ENCODE measurements at regions of chrX and their contacts with region 1.

Region 1: GRCh38 chrX:155417769-155418168 is 35.9 kb downstream of the F8A2 start:
- DNase-seq: no peak
- ATAC-seq: peak; percentile 56
- H3K4me3 ChIP-seq: no peak overlapping the region
- H3K27ac ChIP-seq: no peak overlapping the region
- H3K4me1 ChIP-seq: no peaks in the 10 kb centered on the region
- H3K27me3 ChIP-seq: no peaks in the 10 kb centered on the region
- CTCF ChIP-seq: no peak
- EP300 ChIP-seq: no peak
- POLR2A ChIP-seq: no peak
- RAD21 ChIP-seq: no peak

Region 2: GRCh38 chrX:154136627-154137161 is 1281.1 kb before region 1 on chrX:
- CTCF ChIA-PET with region 1: no interaction called
- POLR2A ChIA-PET with region 1: no interaction called
- RAD21 ChIA-PET with region 1: no interaction called
- SMC1A ChIA-PET with region 1: no interaction called
- in situ Hi-C with region 1: loop called (anchors 25 kb)
- intact Hi-C with region 1: no loop called
- DNase-seq: no peak
- ATAC-seq: peak; percentile 85
- H3K4me3 ChIP-seq: no peak overlapping the region
- H3K27ac ChIP-seq: no peak overlapping the region
- H3K4me1 ChIP-seq: no peaks in the 10 kb centered on the region
- H3K27me3 ChIP-seq: no peaks in the 10 kb centered on the region; a peak in 1 of 4 replicates
- CTCF ChIP-seq: peak; percentile 63 to 70 (median 67)
- EP300 ChIP-seq: no peak
- POLR2A ChIP-seq: no peak
- RAD21 ChIP-seq: peak; percentile 53

Region 3: GRCh38 chrX:154785716-154786115 is 632.1 kb before region 1 on chrX:
- CTCF ChIA-PET with region 1: no interaction called
- POLR2A ChIA-PET with region 1: interaction called, 13 read pairs
- RAD21 ChIA-PET with region 1: no interaction called
- SMC1A ChIA-PET with region 1: no interaction called
- in situ Hi-C with region 1: no loop called
- intact Hi-C with region 1: no loop called
- DNase-seq: no peak
- ATAC-seq: no peak
- H3K4me3 ChIP-seq: no peak overlapping the region
- H3K27ac ChIP-seq: no peak overlapping the region
- H3K4me1 ChIP-seq: no peaks in the 10 kb centered on the region; the same call in 1 of the 2 replicates
- H3K27me3 ChIP-seq: no peaks in the 10 kb centered on the region
- CTCF ChIP-seq: no peak
- EP300 ChIP-seq: no peak
- POLR2A ChIP-seq: no peak
- RAD21 ChIP-seq: no peak

Region 4: GRCh38 chrX:155534797-155535196 is 117.0 kb after region 1 on chrX:
- CTCF ChIA-PET with region 1: no interaction called
- POLR2A ChIA-PET with region 1: no interaction called
- RAD21 ChIA-PET with region 1: no interaction called
- SMC1A ChIA-PET with region 1: no interaction called
- in situ Hi-C with region 1: loop called (anchors 25 kb)
- intact Hi-C with region 1: no loop called
- DNase-seq: no peak
- ATAC-seq: no peak
- H3K4me3 ChIP-seq: no peak overlapping the region
- H3K27ac ChIP-seq: no peak overlapping the region
- H3K4me1 ChIP-seq: no peaks in the 10 kb centered on the region
- H3K27me3 ChIP-seq: no peaks in the 10 kb centered on the region
- CTCF ChIP-seq: peak in 1 of 3 experiments; percentile 18; a peak in 2 of 6 replicates
- EP300 ChIP-seq: no peak
- POLR2A ChIP-seq: no peak
- RAD21 ChIP-seq: peak; percentile 26; the same call in 1 of the 2 replicates

Measured in GM12878 (cell line).